Naive thymus-derived CD4-positive, alpha-beta T cell (primary cell): ENCODE measurements at regions of chr11 and their contacts with region 1.

Region 1: DNA sequence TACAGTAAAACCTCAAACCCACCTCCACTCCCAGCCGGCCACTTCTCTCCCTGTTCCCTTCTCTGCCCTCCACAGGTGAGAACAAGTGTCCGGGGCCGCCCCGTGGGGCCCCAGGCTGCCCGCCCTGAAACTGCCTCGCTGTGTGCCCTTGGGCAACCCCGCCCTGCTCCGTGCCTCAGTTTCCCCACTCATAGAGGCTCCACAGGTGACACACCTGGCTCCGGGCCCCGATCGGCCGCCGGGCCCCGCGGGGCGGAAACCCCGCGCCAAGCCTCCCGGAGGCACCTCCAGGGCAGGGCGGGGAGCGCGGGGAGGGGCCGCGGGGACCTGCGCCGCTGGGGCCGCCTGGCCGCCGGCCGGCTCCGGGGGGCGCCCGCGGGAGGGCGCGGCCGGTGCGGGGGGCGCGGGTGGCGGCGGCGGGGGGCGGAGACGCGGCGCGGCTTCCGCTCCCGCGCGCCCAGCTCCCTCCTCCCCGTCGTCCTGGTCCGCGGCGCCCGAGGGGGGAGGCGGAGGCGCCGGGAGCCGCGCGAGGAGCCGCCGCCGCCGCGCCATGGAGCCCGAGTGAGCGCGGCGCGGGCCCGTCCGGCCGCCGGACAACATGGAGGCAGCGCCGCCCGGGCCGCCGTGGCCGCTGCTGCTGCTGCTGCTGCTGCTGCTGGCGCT is at the start of gene LRP5:
- DNase-seq: peak in 1 of 9 donors; percentile 52
- ATAC-seq: peak; percentile 48
- H3K4me3 ChIP-seq: peak within 1 kb of the TSS; percentile 50
- H3K4me3 Mint-ChIP-seq: peak within 1 kb of the TSS; percentile 86 to 92 (median 88)
- H3K27ac ChIP-seq: no peak within 1 kb of the TSS
- H3K27ac Mint-ChIP-seq: peak within 1 kb of the TSS; percentile 35 to 87 (median 67)
- H3K4me1 ChIP-seq: peaks cover 8 to 22% of the 10 kb centered on the region in 2 donors
- H3K4me1 Mint-ChIP-seq: peaks cover 14 to 47% (median 31%) of the 10 kb centered on the region in 7 donors
- H3K27me3 ChIP-seq: peaks cover 0 to 4% of the 10 kb centered on the region in 2 donors
- H3K27me3 Mint-ChIP-seq: peaks cover 0 to 18% (median 0%) of the 10 kb centered on the region in 5 donors
- total RNA-seq, gene LRP5: 1.4 to 29.9 (median 2.3) TPM

Region 2: DNA sequence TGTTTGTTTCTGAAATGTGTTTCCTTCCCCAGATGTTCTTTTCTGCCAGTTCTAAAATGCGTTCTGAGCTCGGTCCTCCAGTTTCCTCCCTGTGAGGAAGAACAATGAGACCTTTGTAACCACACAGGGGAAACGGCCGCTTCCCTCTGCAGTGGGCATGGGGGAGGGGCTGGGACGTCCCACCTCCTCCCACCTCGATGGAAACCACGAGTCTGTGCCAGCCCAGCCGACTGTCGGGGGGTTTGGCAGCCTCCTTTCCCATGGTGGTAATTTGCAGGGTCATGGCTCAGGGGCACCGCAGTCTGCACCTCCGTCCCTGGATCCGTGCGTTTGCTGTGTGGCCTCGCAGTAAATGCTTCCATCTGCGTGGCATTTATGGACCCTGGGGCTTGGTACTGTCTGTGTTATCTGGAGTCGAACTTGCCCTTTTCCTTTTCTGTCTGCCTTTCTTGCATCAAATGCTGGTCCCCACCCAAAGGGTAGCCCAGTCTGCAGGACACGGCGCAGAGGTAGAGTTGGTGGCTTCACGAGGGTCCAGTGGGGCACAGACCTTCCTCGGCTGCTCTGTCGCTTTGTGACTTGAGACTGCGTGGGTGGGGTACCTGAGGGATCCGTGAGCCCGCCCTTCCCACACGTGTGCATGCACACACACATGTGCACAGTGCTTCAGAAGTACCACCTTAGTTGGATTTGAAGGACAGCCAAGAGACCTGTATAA is 16.3 kb after region 1 on chr11:
- CTCF ChIA-PET with region 1: no interaction called
- POLR2A ChIA-PET with region 1: interaction called, 4 read pairs
- intact Hi-C with region 1: loop called in 1 of 2 experiments (anchors 2 kb)
- DNase-seq: peak in 3 of 9 donors; percentile 26 to 38 (median 31)
- ATAC-seq: peak; percentile 47
- H3K4me3 ChIP-seq: no peak overlapping the region
- H3K4me3 Mint-ChIP-seq: peak overlapping the region; percentile 39 to 81 (median 70)
- H3K27ac ChIP-seq: no peak overlapping the region
- H3K27ac Mint-ChIP-seq: peak overlapping the region in 1 of 9 donors; percentile 31
- H3K4me1 ChIP-seq: peaks cover 15 to 68% of the 10 kb centered on the region in 2 donors
- H3K4me1 Mint-ChIP-seq: peaks cover 33 to 68% (median 63%) of the 10 kb centered on the region in 7 donors
- H3K27me3 ChIP-seq: no peaks in the 10 kb centered on the region
- H3K27me3 Mint-ChIP-seq: no peaks in the 10 kb centered on the region

Region 3: DNA sequence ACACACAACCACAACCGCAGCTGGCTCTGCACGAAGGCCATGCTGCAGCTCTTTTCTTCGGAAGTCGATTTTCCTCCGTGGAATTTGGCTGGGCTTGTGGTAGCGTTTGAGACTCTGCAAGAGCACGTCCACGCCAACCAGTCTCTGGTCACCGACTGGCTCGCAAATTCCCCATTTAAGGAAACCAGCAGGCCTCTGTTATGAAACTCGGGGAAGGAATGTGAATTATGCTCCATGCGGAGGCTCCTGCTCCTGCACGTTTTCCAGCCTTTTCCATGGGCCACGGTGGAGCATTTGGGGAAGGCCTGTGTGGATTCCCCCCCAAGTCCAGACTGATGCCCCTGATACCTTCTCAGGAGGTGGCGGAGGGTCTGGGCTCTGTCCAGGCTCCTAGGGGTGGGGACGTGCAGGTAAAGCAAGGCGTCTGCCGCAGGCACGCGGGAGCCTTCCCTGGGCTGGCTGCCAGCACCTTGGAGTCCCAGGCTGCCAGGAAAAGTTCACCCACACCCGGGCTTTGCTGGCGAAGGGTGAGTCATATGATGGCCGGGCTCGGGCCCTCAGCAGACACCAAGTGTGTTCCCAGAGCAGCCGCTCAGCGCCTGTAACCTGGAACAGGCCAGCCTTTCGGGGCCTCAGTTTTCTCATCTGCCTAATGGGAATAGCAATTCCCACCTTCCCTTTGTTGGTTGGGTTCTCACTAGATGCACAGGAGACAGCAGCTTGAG is 42.1 kb after region 1 on chr11:
- CTCF ChIA-PET with region 1: no interaction called
- POLR2A ChIA-PET with region 1: no interaction called
- intact Hi-C with region 1: loop called in 1 of 2 experiments (anchors 5 kb)
- DNase-seq: no peak
- ATAC-seq: no peak
- H3K4me3 ChIP-seq: no peak overlapping the region
- H3K4me3 Mint-ChIP-seq: no peak overlapping the region
- H3K27ac ChIP-seq: no peak overlapping the region
- H3K27ac Mint-ChIP-seq: no peak overlapping the region
- H3K4me1 ChIP-seq: no peaks in the 10 kb centered on the region
- H3K4me1 Mint-ChIP-seq: no peaks in the 10 kb centered on the region
- H3K27me3 ChIP-seq: no peaks in the 10 kb centered on the region
- H3K27me3 Mint-ChIP-seq: no peaks in the 10 kb centered on the region

Region 4: GRCh38 chr11:68383976-68384501 is 71.8 kb after region 1 on chr11:
- CTCF ChIA-PET with region 1: no interaction called
- POLR2A ChIA-PET with region 1: no interaction called
- intact Hi-C with region 1: loop called in 1 of 2 experiments (anchors 2 kb)
- DNase-seq: peak; percentile 16 to 74 (median 53)
- ATAC-seq: peak; percentile 59
- H3K4me3 ChIP-seq: no peak overlapping the region
- H3K4me3 Mint-ChIP-seq: no peak overlapping the region
- H3K27ac ChIP-seq: no peak overlapping the region
- H3K27ac Mint-ChIP-seq: peak overlapping the region in 1 of 9 donors; percentile 29
- H3K4me1 ChIP-seq: no peaks in the 10 kb centered on the region
- H3K4me1 Mint-ChIP-seq: peaks cover 0 to 42% (median 12%) of the 10 kb centered on the region in 7 donors
- H3K27me3 ChIP-seq: no peaks in the 10 kb centered on the region
- H3K27me3 Mint-ChIP-seq: peaks cover 0 to 13% (median 6%) of the 10 kb centered on the region in 5 donors